ENCODE measurements at regions of chr1 and their contacts with region 1.

Region 1: DNA sequence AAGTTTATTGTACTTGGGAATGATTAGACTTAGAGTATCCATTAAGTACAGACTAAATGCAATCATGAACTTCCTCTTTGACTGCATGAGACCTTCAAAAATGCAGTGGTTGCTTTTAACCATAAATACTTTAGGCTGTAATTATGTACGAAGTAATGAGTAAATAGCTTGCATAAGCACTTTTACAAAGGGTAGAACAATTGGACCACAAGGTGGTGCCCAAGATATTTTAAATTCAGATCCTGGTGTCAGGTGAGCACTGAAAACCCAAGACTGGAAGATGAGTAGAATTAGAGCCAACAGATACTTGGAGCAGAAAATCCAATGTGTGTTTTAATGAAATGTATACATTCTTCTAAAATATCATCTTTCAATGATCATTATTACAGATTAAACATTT is 43.4 kb upstream of the RHOU start:
- DNase-seq: no peak
- H3K4me3 Mint-ChIP-seq: no peak overlapping the region
- H3K27ac Mint-ChIP-seq: no peak overlapping the region
- H3K4me1 Mint-ChIP-seq: no peaks in the 10 kb centered on the region
- H3K27me3 Mint-ChIP-seq: peaks cover 2% of the 10 kb centered on the region

Region 2: GRCh38 chr1:228891272-228892034 is 199.5 kb after region 1 on chr1:
- intact Hi-C with region 1: loop called (anchors 2 kb)
- DNase-seq: no peak
- H3K4me3 Mint-ChIP-seq: no peak overlapping the region
- H3K27ac Mint-ChIP-seq: no peak overlapping the region
- H3K4me1 Mint-ChIP-seq: peaks cover 24% of the 10 kb centered on the region
- H3K27me3 Mint-ChIP-seq: peaks cover 5% of the 10 kb centered on the region

Measured in activated T-helper 1 cell treated with anti-CD3 and anti-CD28 coated beads, Interleukin-12 subunit alpha, Interleukin-12 subunit beta, Interleukin-2, Interleukin-4 antibody, amounts not matched to agents 30 ng/mL and 10 ng/mL and 1 ng/mL, durations not matched to agents 14 hours and 24 hours and 36 hours (primary cell).